ENCODE measurements at regions of chr1 and their contacts with region 1.

Region 1: DNA sequence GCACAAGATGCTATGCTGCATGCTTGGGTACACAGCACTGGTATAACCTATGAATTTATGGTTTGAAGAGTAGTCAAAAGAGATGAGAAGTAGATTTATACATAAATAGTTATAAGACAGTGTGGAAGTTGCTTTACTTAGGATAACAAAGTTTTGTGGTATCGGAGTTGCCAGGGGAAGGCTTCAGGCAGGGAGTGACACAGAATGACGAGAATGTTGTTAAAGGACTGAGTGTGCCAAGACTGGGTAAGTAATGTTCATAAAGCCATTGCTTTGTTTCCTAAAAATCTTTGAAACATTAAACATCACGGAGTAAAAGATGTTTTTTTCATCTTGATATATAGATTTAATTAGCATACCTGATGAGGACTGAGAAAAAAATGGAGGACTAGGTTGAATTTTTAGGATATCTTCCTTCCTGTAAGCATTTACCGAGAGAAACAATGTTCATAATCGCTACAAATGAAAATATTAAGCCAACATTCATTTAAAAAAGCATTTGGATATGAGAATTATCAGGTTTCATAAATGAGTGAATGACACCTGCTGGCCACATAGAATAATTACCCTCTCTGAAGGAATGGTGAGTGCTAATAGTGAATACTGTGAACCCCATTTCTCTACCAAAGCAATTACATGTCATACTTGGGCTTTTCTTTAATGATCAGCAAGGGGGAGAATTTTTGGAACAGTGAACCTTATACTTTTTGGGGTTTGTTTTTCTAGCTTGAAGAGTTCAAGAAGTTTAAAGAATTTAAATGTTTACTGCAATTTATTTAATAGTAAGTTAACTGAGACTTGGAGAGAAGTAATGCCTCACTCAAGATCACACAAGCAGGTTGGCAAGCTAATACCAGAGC is 28.4 kb downstream of the EXTL2 start:
- DNase-seq: no peak
- ATAC-seq: peak; percentile 54

Region 2: DNA sequence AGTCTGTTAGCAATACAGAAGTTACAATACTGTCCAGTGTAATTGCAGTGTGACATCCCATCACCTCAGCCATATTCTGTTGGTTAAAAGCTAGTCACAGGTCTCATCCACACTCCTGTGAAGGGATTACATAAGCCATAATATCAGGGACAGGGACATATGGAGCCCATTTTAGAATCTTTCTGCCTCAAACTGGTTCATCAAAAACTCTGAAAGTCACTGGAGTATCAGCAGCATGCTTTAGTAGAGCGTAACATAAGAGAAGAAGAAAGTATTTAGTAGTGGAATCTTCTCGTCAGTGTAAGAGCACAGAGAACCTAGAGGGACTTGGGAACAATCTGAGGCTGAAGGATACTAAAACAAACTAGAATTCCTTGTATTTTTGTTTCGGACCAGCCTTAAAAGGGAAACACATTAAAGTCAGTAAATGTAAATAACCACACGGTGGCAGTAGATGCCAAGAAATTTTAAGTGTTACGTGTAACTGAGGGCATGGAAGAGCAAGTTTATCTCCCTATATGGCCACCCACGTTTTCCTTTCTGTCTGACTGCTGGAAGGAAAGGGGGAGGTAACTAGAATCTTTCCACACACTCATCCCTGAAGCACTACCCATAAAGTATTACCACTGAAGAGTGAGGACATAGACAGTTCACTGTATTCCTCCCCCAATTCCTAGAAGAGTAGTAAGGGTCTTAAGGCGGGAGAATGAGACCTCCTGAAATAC is 1057.7 kb before region 1 on chr1:
- intact Hi-C with region 1: loop called (anchors 5 kb)
- DNase-seq: no peak
- ATAC-seq: peak; percentile 84

Region 3: GRCh38 chr1:100606438-100606837 is 259.8 kb before region 1 on chr1:
- intact Hi-C with region 1: loop called (anchors 1 kb)
- DNase-seq: no peak
- ATAC-seq: peak; percentile 76

Region 4: GRCh38 chr1:100773444-100773843 is 92.8 kb before region 1 on chr1:
- intact Hi-C with region 1: no loop called
- DNase-seq: no peak
- ATAC-seq: no peak